ENCODE measurements at regions of chr6 and their contacts with region 1.

Region 1: GRCh38 chr6:109073344-109074132 is 21.1 kb downstream of the SESN1 start:
- ATAC-seq: peak in 7 of 8 experiments; percentile 27 to 60 (median 36)
- H3K4me3 ChIP-seq: no peak overlapping the region
- H3K27ac ChIP-seq: no peak overlapping the region
- H3K4me1 ChIP-seq: no peaks in the 10 kb centered on the region

Region 2: GRCh38 chr6:108760126-108761050 is 313.1 kb before region 1 on chr6:
- in situ Hi-C with region 1: no loop called
- ATAC-seq: peak; percentile 94 to 99 (median 98)
- H3K4me3 ChIP-seq: no peak overlapping the region
- H3K27ac ChIP-seq: no peak overlapping the region
- H3K4me1 ChIP-seq: peaks cover 0 to 8% of the 10 kb centered on the region in 2 donors

Region 3: GRCh38 chr6:108914235-108915022 is 159.1 kb before region 1 on chr6:
- in situ Hi-C with region 1: loop called in 1 of 9 experiments (anchors 25 kb)
- ATAC-seq: no peak
- H3K4me3 ChIP-seq: no peak overlapping the region
- H3K27ac ChIP-seq: no peak overlapping the region
- H3K4me1 ChIP-seq: no peaks in the 10 kb centered on the region

Measured in motor neuron (in vitro differentiated cells).